Left ventricle myocardium superior (tissue), 1 donor: ENCODE measurements at regions of chr12 and their contacts with region 1.

Region 1: DNA sequence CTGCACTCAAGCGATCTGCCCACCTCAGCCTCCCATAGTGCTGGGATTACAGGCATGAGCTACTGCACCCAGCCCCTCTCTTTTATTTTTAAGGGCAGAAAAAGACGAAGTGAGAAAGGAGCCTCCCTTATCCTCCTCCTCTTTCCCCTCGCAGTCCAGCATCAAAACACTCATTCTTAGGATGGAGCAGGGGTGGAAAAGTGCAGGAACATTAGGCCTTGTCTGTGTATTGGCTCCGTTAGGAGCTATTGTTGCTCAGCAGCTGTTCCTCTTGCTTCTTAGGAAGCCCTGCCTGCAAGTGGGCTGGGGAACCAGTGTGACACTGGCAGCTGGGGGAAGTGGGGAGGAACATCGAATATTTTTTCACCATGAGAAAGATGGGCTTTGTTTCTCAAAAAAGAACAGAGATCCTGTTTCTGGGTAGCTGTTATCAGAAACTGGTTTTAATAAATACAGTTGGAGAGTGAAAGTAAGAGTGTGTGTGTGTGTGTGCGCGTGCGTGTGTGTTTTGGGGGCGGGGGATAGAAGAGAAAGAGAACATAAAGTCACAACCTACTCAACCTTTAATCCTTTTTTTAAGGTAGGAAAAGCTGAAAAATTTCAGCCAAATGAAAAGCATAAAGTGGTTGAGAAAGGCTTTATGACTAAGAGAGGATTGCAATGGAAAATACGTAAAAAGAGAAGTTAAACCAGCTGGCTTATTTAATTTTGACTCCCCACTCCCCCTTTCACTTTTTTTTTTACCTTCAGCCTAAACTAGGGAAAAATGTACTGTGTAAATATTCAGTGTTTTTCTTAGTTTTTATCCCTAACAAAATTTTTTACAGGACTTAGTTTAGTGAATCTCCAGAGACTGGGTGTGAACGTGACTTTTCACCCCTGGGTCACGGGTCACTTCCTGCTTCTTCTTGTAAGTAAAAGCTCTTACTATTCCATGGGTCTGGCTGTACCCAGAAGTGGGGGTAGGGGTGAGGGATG is 197.2 kb upstream of the PLEKHG7 start:
- DNase-seq: peak; percentile 69
- ATAC-seq: peak; percentile 72

Region 2: DNA sequence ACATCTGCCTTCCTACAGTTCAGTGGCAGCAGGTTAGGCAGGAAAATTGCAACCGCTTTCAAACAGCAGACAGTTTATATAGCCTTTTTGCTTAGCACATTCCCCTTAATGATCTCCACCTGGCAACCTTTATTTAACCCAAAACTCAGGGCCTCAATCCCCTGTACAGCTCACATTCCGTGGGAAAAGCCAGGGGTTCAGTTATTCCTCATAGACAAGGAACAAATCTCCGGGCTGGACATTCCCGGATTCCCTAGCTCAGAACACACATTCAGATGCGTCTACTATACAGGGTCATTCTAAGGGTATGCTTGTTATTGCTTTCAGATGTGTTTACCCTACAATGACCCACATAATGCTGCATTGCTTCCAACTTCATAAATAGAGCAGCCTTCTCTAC is 1249.1 kb before region 1 on chr12:
- intact Hi-C with region 1: no loop called
- DNase-seq: no peak
- ATAC-seq: no peak

Region 3: GRCh38 chr12:92378682-92379479 is 126.7 kb before region 1 on chr12:
- intact Hi-C with region 1: no loop called
- DNase-seq: no peak
- ATAC-seq: no peak

Region 4: GRCh38 chr12:92561543-92561899 is 56.0 kb after region 1 on chr12:
- intact Hi-C with region 1: loop called (anchors 10 kb)
- DNase-seq: no peak
- ATAC-seq: peak; percentile 92